CD8-positive, alpha-beta memory T cell (primary cell): ENCODE measurements at regions of chr9 and their contacts with region 1.

Region 1: DNA sequence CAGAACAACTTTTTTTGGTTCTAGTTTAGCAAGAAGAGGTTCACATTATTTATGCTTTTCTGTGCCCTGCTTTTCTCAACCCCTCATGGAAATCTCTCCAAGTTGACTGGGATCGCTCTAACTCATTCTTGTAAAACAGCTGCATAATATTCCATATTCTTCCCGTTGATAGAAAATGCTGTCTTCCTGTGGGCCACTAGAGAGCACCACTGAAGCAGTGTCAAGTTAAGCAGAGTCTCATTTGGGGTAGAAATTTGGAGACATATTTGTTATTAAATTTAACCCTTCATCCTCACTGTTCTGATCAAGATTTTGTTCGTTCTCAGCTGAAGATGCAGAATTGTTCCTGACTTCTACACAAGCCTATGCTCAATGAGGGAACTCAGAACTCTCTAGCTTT is 140.1 kb downstream of the CEMIP2 start:
- DNase-seq: peak in 1 of 5 donors; percentile 6
- H3K4me3 ChIP-seq: no peak overlapping the region
- H3K4me3 Mint-ChIP-seq: no peak overlapping the region
- H3K27ac ChIP-seq: no peak overlapping the region
- H3K27ac Mint-ChIP-seq: no peak overlapping the region
- H3K4me1 ChIP-seq: no peaks in the 10 kb centered on the region
- H3K4me1 Mint-ChIP-seq: no peaks in the 10 kb centered on the region
- H3K27me3 ChIP-seq: no peaks in the 10 kb centered on the region
- H3K27me3 Mint-ChIP-seq: peaks cover 7 to 9% of the 10 kb centered on the region in 2 donors

Region 2: DNA sequence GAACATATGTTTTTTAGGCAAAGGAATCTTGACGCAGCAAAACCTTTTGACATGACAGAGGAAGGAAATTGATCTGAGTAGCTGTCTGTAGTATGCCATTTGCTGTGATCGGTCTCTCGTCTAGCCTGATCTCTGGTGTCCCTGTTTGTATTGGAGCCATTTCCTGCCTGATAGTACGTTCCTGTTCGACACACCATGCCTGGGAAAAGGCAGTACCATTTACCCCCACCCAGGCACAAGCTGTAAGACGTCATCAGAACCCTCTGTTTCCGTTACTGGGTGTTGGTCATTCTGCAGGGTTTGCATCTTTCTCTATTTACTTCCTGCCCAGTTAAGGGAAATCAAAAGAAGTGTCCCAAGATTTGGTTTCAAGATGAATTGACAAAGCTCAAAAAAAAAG is 10.4 kb after region 1 on chr9:
- CTCF ChIA-PET with region 1: interaction called, 10 read pairs
- POLR2A ChIA-PET with region 1: interaction called, 4 read pairs
- DNase-seq: peak in 1 of 5 donors; percentile 29
- H3K4me3 ChIP-seq: no peak overlapping the region
- H3K4me3 Mint-ChIP-seq: peak overlapping the region in 6 of 7 donors; percentile 69 to 82 (median 76)
- H3K27ac ChIP-seq: no peak overlapping the region
- H3K27ac Mint-ChIP-seq: peak overlapping the region in 7 of 8 donors; percentile 12 to 95 (median 71)
- H3K4me1 ChIP-seq: peaks cover 14% of the 10 kb centered on the region
- H3K4me1 Mint-ChIP-seq: peaks cover 26 to 30% (median 27%) of the 10 kb centered on the region in 3 donors
- H3K27me3 ChIP-seq: no peaks in the 10 kb centered on the region
- H3K27me3 Mint-ChIP-seq: no peaks in the 10 kb centered on the region

Region 3: GRCh38 chr9:71675129-71675856 is 47.0 kb after region 1 on chr9:
- CTCF ChIA-PET with region 1: no interaction called
- POLR2A ChIA-PET with region 1: no interaction called
- DNase-seq: no peak
- H3K4me3 ChIP-seq: no peak overlapping the region
- H3K4me3 Mint-ChIP-seq: no peak overlapping the region
- H3K27ac ChIP-seq: no peak overlapping the region
- H3K27ac Mint-ChIP-seq: peak overlapping the region in 1 of 8 donors; percentile 75
- H3K4me1 ChIP-seq: no peaks in the 10 kb centered on the region
- H3K4me1 Mint-ChIP-seq: peaks cover 8 to 36% (median 11%) of the 10 kb centered on the region in 3 donors
- H3K27me3 ChIP-seq: no peaks in the 10 kb centered on the region
- H3K27me3 Mint-ChIP-seq: no peaks in the 10 kb centered on the region